ENCODE measurements at regions of chr7 and their contacts with region 1.

Region 1: DNA sequence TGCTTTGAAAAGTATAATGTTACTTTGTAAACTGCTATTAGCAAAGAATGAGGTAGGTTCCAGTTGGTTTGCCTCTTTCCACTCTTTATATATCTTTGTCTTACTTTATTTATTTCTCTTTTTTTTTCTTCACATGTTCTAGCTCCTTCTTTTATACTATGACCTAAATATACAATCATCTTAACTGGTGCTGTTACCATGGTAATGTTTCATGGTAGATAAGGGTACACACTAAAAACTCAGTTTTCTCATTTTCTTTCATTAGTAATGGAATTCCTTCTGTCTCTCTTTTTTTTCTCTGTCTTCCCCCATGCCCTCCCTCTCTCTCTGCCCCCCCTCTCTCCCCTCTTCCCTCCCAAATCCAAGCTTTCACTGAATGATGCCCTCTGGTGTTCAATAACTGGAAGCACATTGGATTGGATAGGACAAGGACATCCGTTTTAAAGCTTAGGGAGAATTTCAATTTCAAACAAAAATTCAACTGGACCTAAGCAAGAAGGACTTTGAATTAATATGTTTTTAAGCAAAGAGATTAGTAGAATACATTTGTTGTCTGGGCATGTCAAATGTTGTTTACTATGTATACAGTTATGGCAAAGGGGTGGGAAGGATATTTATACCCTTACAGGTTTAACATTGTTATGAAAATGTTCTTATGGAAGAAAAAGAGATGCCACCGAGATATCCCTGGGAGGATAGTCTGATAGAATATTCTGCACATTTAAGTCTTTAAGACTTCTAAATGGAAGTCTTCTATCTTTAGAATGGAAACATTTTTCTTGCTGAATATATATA is 6.0 kb downstream of the CHRM2 start:
- DNase-seq: no peak
- ATAC-seq: no peak
- H3K4me3 ChIP-seq: no peak overlapping the region
- H3K27ac ChIP-seq: peak overlapping the region in 8 of 12 donors; percentile 9 to 83 (median 36)
- H3K4me1 ChIP-seq: peaks cover 0 to 34% (median 5%) of the 10 kb centered on the region in 12 donors
- H3K27me3 ChIP-seq: peaks cover 0 to 28% (median 3%) of the 10 kb centered on the region in 9 donors
- CTCF ChIP-seq: peak in 8 of 12 donors; percentile 9 to 39 (median 26)
- POLR2A ChIP-seq: no peak

Region 2: GRCh38 chr7:136687693-136688322 is 186.6 kb before region 1 on chr7:
- intact Hi-C with region 1: no loop called
- DNase-seq: no peak
- ATAC-seq: no peak
- H3K4me3 ChIP-seq: no peak overlapping the region
- H3K27ac ChIP-seq: no peak overlapping the region
- H3K4me1 ChIP-seq: no peaks in the 10 kb centered on the region
- H3K27me3 ChIP-seq: no peaks in the 10 kb centered on the region
- CTCF ChIP-seq: peak in 10 of 12 donors; percentile 25 to 58 (median 42)
- POLR2A ChIP-seq: no peak

Region 3: GRCh38 chr7:136783934-136784333 is 90.5 kb before region 1 on chr7:
- intact Hi-C with region 1: no loop called
- DNase-seq: no peak
- ATAC-seq: no peak
- H3K4me3 ChIP-seq: no peak overlapping the region
- H3K27ac ChIP-seq: no peak overlapping the region
- H3K4me1 ChIP-seq: no peaks in the 10 kb centered on the region
- H3K27me3 ChIP-seq: no peaks in the 10 kb centered on the region
- CTCF ChIP-seq: no peak
- POLR2A ChIP-seq: no peak

Region 4: DNA sequence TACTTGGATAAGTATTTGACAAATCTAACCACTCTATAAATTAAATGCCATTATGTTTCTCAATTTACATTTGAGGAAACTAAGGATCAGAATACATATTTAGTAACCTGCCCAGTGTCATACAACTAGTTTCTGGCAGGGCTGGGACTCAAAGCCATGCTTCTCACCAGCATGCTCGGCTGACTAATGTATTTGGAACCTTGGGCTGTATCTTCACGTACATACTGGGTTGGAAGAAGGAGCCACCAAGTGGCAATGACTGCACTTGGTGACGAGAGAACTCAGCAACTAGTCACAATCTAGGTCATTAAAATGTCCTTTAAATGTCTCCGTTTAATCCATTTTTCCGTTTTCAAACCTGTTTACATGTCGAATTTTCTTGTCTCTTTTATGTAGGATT is 36.9 kb after region 1 on chr7:
- intact Hi-C with region 1: loop called in 1 of 10 experiments (anchors 5 kb)
- DNase-seq: peak in 1 of 5 donors; percentile 33
- ATAC-seq: peak; percentile 56 to 89 (median 76)
- H3K4me3 ChIP-seq: no peak overlapping the region
- H3K27ac ChIP-seq: no peak overlapping the region
- H3K4me1 ChIP-seq: peaks cover 0 to 7% (median 0%) of the 10 kb centered on the region in 12 donors
- H3K27me3 ChIP-seq: no peaks in the 10 kb centered on the region
- CTCF ChIP-seq: peak in 3 of 12 donors; percentile 7 to 17 (median 9)
- POLR2A ChIP-seq: no peak

Region 5: DNA sequence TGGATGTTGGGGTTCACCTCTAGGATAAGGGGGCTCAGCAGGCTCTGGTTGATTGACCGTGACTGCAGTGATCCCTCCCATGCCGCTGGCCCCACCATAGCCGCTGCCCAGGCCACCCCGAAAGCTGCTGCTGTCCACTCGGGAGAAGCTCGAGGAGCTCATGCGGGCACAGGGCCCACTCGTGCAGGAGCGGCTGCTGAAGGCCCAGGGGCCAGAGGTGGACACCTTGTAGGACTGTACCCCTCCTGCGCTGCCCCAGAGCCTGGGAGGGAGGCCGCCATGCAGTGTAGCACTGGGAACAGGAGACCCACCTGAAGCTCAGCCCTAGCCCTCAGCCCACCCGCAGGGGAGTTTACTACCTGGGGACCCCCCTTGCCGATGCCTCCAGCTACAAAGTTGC is 64.0 kb after region 1 on chr7:
- intact Hi-C with region 1: loop called in 1 of 10 experiments (anchors 10 kb)
- DNase-seq: peak in 1 of 5 donors; percentile 60
- ATAC-seq: peak in 2 of 4 donors; percentile 25 to 38
- H3K4me3 ChIP-seq: no peak overlapping the region
- H3K27ac ChIP-seq: peak overlapping the region in 2 of 12 donors; percentile 43 to 84
- H3K4me1 ChIP-seq: peaks cover 0 to 34% (median 8%) of the 10 kb centered on the region in 12 donors
- H3K27me3 ChIP-seq: no peaks in the 10 kb centered on the region
- CTCF ChIP-seq: no peak
- POLR2A ChIP-seq: no peak

Region 6: DNA sequence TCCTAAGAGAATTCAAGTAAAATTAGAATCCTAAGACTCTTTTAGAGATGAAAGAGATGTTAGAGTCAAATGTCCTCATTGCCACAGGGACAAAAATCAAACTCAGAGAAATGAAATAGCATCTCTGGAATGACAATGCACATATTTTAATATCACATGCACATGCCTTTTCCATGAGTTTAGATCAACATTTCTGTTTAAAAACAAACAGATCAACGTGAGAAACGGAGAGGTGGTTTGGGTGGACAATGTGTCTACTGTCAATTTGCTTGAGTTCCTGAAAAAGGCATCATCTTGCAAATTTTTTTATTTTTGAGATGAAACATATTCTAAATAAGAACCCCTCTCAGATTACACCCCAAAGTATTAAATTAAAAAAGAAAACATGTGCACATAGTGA is 124.1 kb after region 1 on chr7:
- intact Hi-C with region 1: loop called in 2 of 10 experiments (anchors 10 kb)
- DNase-seq: no peak
- ATAC-seq: no peak
- H3K4me3 ChIP-seq: no peak overlapping the region
- H3K27ac ChIP-seq: peak overlapping the region in 7 of 12 donors; percentile 6 to 69 (median 62)
- H3K4me1 ChIP-seq: peaks cover 0 to 28% (median 6%) of the 10 kb centered on the region in 12 donors
- H3K27me3 ChIP-seq: no peaks in the 10 kb centered on the region
- CTCF ChIP-seq: no peak
- POLR2A ChIP-seq: no peak

Region 7: DNA sequence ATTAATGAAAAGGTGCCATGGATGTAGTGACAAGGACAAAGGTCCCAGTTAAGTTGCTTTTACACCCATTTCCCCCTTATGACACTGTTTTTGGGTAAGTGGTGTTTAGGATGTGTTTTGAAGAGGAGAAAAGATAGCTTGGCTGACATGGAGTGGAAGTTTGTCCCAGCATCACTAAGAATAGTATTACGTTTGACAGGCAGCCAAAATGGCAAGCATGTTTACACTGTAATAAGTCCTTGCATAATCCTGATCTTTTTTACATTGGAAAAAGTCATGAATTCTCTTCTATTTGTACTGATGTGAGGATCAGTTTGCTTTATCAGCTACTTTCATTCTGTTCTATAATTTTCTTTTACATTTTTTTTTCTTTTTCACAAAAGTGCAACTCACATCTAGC is 131.9 kb after region 1 on chr7:
- intact Hi-C with region 1: loop called in 1 of 10 experiments (anchors 5 kb)
- DNase-seq: peak in 1 of 5 donors; percentile 31
- ATAC-seq: peak; percentile 65 to 83 (median 77)
- H3K4me3 ChIP-seq: no peak overlapping the region
- H3K27ac ChIP-seq: peak overlapping the region in 9 of 12 donors; percentile 17 to 78 (median 63)
- H3K4me1 ChIP-seq: peaks cover 0 to 26% (median 8%) of the 10 kb centered on the region in 12 donors
- H3K27me3 ChIP-seq: no peaks in the 10 kb centered on the region
- CTCF ChIP-seq: no peak
- POLR2A ChIP-seq: no peak